Right cardiac atrium (tissue), 5 donors: ENCODE measurements at regions of chr3 and their contacts with region 1.

Region 1: DNA sequence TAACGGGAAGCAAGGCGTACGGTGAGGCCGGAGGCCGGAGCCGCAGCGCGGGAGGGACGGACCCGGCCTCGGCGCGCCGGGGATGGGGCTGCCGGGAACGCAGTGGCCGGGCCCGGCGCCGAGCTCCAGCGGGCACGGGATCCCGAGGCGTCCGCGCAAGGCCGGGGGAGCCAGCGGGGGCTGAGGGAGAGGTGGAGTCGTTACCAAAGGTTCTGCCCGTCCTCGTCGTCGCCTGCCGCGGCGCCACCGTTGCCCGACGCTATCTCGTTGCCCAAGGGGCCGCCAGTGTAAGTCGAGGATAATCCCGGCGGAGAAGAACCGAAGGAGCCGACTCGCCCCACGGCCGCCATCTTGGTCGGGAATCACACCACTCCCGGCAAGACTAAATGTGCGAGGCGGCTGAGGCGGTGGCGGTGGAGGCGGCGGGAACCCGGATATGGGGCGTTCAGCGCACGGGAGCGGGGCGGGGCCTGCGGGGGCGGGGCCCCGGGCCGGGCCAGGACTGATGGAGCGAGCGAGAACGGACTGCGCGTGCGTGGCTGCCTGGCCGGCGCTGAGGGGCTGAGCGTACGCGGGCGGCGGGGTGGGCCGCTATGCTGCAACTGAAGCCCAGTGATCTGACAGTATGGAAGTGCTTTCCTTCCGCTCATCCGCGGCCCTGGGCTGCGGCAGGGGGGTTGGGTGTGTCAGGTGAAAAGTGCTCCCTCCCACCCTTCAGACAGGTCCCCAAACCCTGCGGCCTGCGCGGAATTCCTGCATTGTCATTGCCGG is at the start of gene DYNC1LI1:
- DNase-seq: peak; percentile 97 to 99 (median 99)
- ATAC-seq: peak; percentile 99
- H3K4me3 ChIP-seq: peak within 1 kb of the TSS; percentile 89
- H3K27ac ChIP-seq: peak within 1 kb of the TSS; percentile 98
- H3K4me1 ChIP-seq: no peaks in the 10 kb centered on the region
- H3K27me3 ChIP-seq: no peaks in the 10 kb centered on the region
- total RNA-seq, gene DYNC1LI1: 41.2 to 48.5 (median 46.1) TPM

Region 2: GRCh38 chr3:32366638-32367397 is 203.8 kb before region 1 on chr3:
- intact Hi-C with region 1: no loop called
- DNase-seq: no peak
- ATAC-seq: no peak
- H3K4me3 ChIP-seq: no peak overlapping the region
- H3K27ac ChIP-seq: no peak overlapping the region
- H3K4me1 ChIP-seq: no peaks in the 10 kb centered on the region
- H3K27me3 ChIP-seq: no peaks in the 10 kb centered on the region

Region 3: GRCh38 chr3:32502118-32502945 is 68.3 kb before region 1 on chr3 and contains the start of gene CMTM6:
- intact Hi-C with region 1: loop called in 1 of 4 experiments (anchors 10 kb)
- DNase-seq: peak; percentile 85 to 94 (median 92)
- ATAC-seq: peak; percentile 95 to 96
- H3K4me3 ChIP-seq: peak within 1 kb of the TSS; percentile 77
- H3K27ac ChIP-seq: peak within 1 kb of the TSS; percentile 89
- H3K4me1 ChIP-seq: peaks cover 3% of the 10 kb centered on the region
- H3K27me3 ChIP-seq: no peaks in the 10 kb centered on the region
- total RNA-seq, gene CMTM6: 13.2 to 21.6 (median 15.1) TPM